PC-9 (cell line): ENCODE measurements at regions of chr12 and their contacts with region 1.

Region 1: GRCh38 chr12:32947206-32948067 is 50.9 kb upstream of the PKP2 start:
- DNase-seq: peak; percentile 14 to 50
- H3K4me3 ChIP-seq: no peak overlapping the region
- H3K27ac ChIP-seq: no peak overlapping the region
- H3K4me1 ChIP-seq: peaks cover 21% of the 10 kb centered on the region
- H3K27me3 ChIP-seq: no peaks in the 10 kb centered on the region
- CTCF ChIP-seq: peak; percentile 66

Region 2: DNA sequence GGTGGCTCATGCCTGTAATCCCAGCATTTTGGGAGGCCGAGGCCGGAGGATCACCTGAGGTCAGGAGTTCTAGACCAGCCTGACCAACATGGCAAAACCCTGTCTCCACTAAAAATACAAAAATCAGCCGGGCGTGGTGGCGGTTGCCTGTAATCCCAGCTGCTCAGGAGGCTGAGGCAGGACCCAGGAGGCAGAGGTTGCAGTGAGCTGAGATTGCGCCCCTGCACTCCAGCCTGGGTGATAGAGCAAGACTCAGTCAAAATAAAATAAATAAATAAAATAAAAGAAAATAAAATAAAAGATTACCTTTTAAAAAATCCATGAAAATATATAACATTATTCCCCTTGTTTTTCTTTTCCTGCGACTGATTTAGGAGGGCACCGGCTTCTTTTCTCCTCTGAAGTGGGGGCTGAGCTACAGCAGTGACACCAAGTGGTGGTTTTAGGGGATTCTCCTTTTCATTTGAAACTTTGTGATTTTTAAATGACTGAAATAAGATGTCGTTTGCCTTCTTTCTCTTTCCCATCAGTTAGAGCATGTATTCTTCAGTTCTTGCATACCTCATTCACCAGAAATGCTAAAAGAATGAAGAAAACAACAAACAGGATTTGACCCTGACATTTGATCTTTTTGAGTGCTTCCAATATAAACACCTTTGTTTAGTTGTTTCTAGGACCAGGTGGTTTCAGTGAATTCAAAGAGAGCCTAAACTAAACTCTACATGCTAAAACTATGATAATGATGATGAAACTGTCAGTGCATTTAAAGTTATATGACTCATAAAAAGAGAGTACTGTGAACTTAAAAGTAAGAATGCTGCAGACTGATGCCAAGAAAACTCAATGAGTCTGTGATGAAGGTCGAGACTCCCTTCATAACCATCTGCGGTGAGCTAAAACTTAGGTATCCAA is 28.3 kb before region 1 on chr12:
- CTCF ChIA-PET with region 1: no interaction called
- POLR2A ChIA-PET with region 1: no interaction called
- intact Hi-C with region 1: loop called (anchors 2 kb)
- DNase-seq: peak in 1 of 2 experiments; percentile 63
- H3K4me3 ChIP-seq: no peak overlapping the region
- H3K27ac ChIP-seq: peak overlapping the region; percentile 45; the same call in 1 of the 2 replicates
- H3K4me1 ChIP-seq: peaks cover 45% of the 10 kb centered on the region
- H3K27me3 ChIP-seq: no peaks in the 10 kb centered on the region
- CTCF ChIP-seq: peak; percentile 60

Region 3: GRCh38 chr12:33223933-33224332 is 276.5 kb after region 1 on chr12:
- CTCF ChIA-PET with region 1: no interaction called
- POLR2A ChIA-PET with region 1: no interaction called
- intact Hi-C with region 1: loop called (anchors 10 kb)
- DNase-seq: peak; percentile 67 to 96
- H3K4me3 ChIP-seq: no peak overlapping the region
- H3K27ac ChIP-seq: peak overlapping the region; percentile 73
- H3K4me1 ChIP-seq: peaks cover 18% of the 10 kb centered on the region
- H3K27me3 ChIP-seq: no peaks in the 10 kb centered on the region
- CTCF ChIP-seq: no peak

Region 4: GRCh38 chr12:33587870-33588712 is 640.7 kb after region 1 on chr12:
- CTCF ChIA-PET with region 1: interaction called, 4 read pairs
- POLR2A ChIA-PET with region 1: no interaction called
- intact Hi-C with region 1: loop called (anchors 5 kb)
- DNase-seq: peak; percentile 66 to 97
- H3K4me3 ChIP-seq: peak overlapping the region; percentile 38; the same call in 1 of the 2 replicates
- H3K27ac ChIP-seq: peak overlapping the region; percentile 96
- H3K4me1 ChIP-seq: peaks cover 50% of the 10 kb centered on the region
- H3K27me3 ChIP-seq: no peaks in the 10 kb centered on the region
- CTCF ChIP-seq: no peak

Region 5: GRCh38 chr12:34218165-34219045 is 1271.0 kb after region 1 on chr12:
- CTCF ChIA-PET with region 1: no interaction called
- POLR2A ChIA-PET with region 1: no interaction called
- intact Hi-C with region 1: loop called (anchors 2 kb)
- DNase-seq: peak; percentile 64 to 73
- H3K4me3 ChIP-seq: peak overlapping the region; percentile 63; the same call in 1 of the 2 replicates
- H3K27ac ChIP-seq: no peak overlapping the region
- H3K4me1 ChIP-seq: no peaks in the 10 kb centered on the region
- H3K27me3 ChIP-seq: no peaks in the 10 kb centered on the region
- CTCF ChIP-seq: peak; percentile 91